Activated T-helper 2 cell treated with anti-CD3 and anti-CD28 coated beads, Interferon-gamma antibody, Interleukin-2, Interleukin-4, amounts not matched to agents 10 μg/mL and 5 μg/mL and 100 μg/mL, durations not matched to agents 14 hours and 24 hours and 36 hours (primary cell): ENCODE measurements at regions of chr20 and their contacts with region 1.

Region 1: GRCh38 chr20:12970372-12970821 is 38.4 kb upstream of the SPTLC3 start:
- DNase-seq: no peak
- H3K4me3 Mint-ChIP-seq: no peak overlapping the region
- H3K27ac Mint-ChIP-seq: no peak overlapping the region
- H3K4me1 Mint-ChIP-seq: peaks cover 4% of the 10 kb centered on the region
- H3K27me3 Mint-ChIP-seq: peaks cover 3% of the 10 kb centered on the region

Region 2: GRCh38 chr20:12914804-12915203 is 55.6 kb before region 1 on chr20:
- intact Hi-C with region 1: no loop called
- DNase-seq: no peak
- H3K4me3 Mint-ChIP-seq: no peak overlapping the region
- H3K27ac Mint-ChIP-seq: no peak overlapping the region
- H3K4me1 Mint-ChIP-seq: no peaks in the 10 kb centered on the region
- H3K27me3 Mint-ChIP-seq: peaks cover 2% of the 10 kb centered on the region

Region 3: DNA sequence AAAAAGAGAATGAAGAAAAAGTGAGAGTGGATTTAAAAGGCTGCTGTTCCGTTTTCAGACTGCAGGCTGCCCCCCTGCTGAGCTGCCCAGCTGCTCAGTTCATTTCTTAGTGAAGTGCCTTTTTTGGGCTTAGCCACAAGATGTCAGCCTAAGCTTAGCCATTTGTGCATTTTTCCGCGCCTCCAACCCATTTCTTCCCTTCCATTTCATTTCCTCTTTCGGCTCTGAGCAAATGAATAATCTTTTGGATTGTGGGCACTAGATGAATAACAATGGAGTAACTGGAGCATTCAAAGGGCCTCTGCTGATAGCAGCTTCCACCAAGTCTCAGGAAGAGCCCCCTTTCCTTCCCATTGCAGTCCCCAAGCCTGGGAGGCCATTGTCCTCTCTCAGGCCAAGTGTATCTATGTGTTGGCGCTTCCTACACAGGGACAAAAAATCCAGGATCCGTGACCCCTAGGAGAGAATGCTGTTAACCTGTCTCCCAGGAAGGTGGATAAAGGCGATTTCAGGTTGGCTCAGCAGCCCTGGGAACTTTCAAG is 45.1 kb before region 1 on chr20:
- intact Hi-C with region 1: loop called (anchors 5 kb)
- DNase-seq: no peak
- H3K4me3 Mint-ChIP-seq: no peak overlapping the region
- H3K27ac Mint-ChIP-seq: no peak overlapping the region
- H3K4me1 Mint-ChIP-seq: peaks cover 13% of the 10 kb centered on the region
- H3K27me3 Mint-ChIP-seq: peaks cover 4% of the 10 kb centered on the region

Region 4: DNA sequence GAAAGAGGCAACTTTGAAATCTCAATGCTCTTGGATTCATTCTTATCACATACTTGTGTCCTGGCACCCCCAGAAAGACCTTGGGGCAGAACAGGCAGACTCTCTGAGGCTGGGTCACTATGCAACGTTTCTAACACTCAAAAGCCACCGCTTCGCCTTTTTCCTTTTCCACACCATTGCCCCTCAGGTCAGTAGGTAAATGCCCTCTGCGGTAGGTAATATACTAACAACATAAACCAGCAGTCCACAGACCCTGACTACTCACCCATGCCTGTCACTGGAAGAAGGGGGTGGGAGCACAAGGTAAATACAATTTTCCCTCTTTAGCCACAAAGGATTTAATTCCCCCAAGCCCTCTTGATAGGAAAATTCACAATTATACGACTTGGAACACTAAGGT is 31.9 kb after region 1 on chr20:
- intact Hi-C with region 1: no loop called
- DNase-seq: no peak
- H3K4me3 Mint-ChIP-seq: no peak overlapping the region
- H3K27ac Mint-ChIP-seq: no peak overlapping the region
- H3K4me1 Mint-ChIP-seq: no peaks in the 10 kb centered on the region
- H3K27me3 Mint-ChIP-seq: peaks cover 5% of the 10 kb centered on the region

Region 5: DNA sequence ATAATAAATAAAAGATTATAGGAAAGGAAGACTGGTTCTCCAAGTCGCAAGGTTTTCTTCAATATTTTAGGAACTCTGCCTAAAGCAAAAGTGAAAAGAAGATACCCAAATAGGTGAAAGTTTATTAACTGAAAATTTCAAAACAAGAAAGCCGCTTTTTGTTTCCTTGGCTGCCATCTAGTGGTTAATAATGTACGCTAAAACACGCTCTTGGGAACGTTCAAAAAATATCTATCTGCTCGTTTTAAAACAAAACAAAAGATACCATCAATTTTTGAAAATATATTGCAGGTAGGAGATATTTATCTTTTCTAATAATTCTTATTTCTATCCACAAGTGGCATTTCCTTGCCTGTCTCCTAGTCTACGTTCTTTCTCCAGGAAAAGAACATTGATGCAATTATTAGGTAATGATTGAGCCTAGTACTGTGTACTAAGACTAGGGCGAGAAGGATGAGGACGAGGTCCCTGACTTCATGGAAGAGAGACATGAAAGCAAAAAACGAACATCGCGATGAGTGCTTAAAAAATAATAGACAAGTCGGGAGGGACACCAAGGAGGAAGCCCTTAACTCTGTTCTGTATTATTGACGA is 135.6 kb after region 1 on chr20:
- intact Hi-C with region 1: loop called (anchors 2 kb)
- DNase-seq: no peak
- H3K4me3 Mint-ChIP-seq: no peak overlapping the region
- H3K27ac Mint-ChIP-seq: no peak overlapping the region
- H3K4me1 Mint-ChIP-seq: no peaks in the 10 kb centered on the region
- H3K27me3 Mint-ChIP-seq: peaks cover 3% of the 10 kb centered on the region

Region 6: GRCh38 chr20:13147071-13147963 is 176.9 kb after region 1 on chr20:
- intact Hi-C with region 1: no loop called
- DNase-seq: no peak
- H3K4me3 Mint-ChIP-seq: no peak overlapping the region
- H3K27ac Mint-ChIP-seq: no peak overlapping the region
- H3K4me1 Mint-ChIP-seq: peaks cover 3% of the 10 kb centered on the region
- H3K27me3 Mint-ChIP-seq: peaks cover 9% of the 10 kb centered on the region